HCT116 (cell line): ENCODE measurements at regions of chr6 and their contacts with region 1.

Region 1: GRCh38 chr6:28683944-28684538 is 158.4 kb downstream of the GPX5 start:
- DNase-seq: peak; percentile 60
- ATAC-seq: peak; percentile 91
- H3K4me3 ChIP-seq: no peak overlapping the region
- H3K27ac ChIP-seq: no peak overlapping the region
- H3K4me1 ChIP-seq: peaks cover 3 to 13% of the 10 kb centered on the region in 2 experiments; a peak in 3 of 4 replicates
- H3K27me3 ChIP-seq: no peaks in the 10 kb centered on the region
- CTCF ChIP-seq: peak; percentile 57 to 83 (median 71)
- POLR2A ChIP-seq: no peak
- RAD21 ChIP-seq: peak; percentile 97

Region 2: GRCh38 chr6:28136585-28137504 is 547.2 kb before region 1 on chr6:
- CTCF ChIA-PET with region 1: no interaction called
- POLR2A ChIA-PET with region 1: no interaction called
- RAD21 ChIA-PET with region 1: no interaction called
- intact Hi-C with region 1: loop called (anchors 2 kb)
- DNase-seq: peak; percentile 78
- ATAC-seq: peak; percentile 66
- H3K4me3 ChIP-seq: peak overlapping the region; percentile 90 to 93
- H3K27ac ChIP-seq: peak overlapping the region; percentile 50
- H3K4me1 ChIP-seq: peaks cover 10 to 19% of the 10 kb centered on the region in 2 experiments
- H3K27me3 ChIP-seq: no peaks in the 10 kb centered on the region
- CTCF ChIP-seq: no peak
- POLR2A ChIP-seq: peak; percentile 44
- RAD21 ChIP-seq: peak; percentile 25; the same call in 1 of the 2 replicates

Region 3: GRCh38 chr6:28393911-28394662 is 290.0 kb before region 1 on chr6:
- CTCF ChIA-PET with region 1: no interaction called
- POLR2A ChIA-PET with region 1: no interaction called
- RAD21 ChIA-PET with region 1: no interaction called
- intact Hi-C with region 1: loop called (anchors 5 kb)
- DNase-seq: no peak
- ATAC-seq: peak; percentile 58
- H3K4me3 ChIP-seq: no peak overlapping the region
- H3K27ac ChIP-seq: no peak overlapping the region
- H3K4me1 ChIP-seq: peaks cover 0 to 14% of the 10 kb centered on the region in 2 experiments; a peak in 2 of 4 replicates
- H3K27me3 ChIP-seq: no peaks in the 10 kb centered on the region
- CTCF ChIP-seq: peak; percentile 29 to 48 (median 36); a peak in 4 of 6 replicates
- POLR2A ChIP-seq: no peak
- RAD21 ChIP-seq: peak; percentile 51

Region 4: DNA sequence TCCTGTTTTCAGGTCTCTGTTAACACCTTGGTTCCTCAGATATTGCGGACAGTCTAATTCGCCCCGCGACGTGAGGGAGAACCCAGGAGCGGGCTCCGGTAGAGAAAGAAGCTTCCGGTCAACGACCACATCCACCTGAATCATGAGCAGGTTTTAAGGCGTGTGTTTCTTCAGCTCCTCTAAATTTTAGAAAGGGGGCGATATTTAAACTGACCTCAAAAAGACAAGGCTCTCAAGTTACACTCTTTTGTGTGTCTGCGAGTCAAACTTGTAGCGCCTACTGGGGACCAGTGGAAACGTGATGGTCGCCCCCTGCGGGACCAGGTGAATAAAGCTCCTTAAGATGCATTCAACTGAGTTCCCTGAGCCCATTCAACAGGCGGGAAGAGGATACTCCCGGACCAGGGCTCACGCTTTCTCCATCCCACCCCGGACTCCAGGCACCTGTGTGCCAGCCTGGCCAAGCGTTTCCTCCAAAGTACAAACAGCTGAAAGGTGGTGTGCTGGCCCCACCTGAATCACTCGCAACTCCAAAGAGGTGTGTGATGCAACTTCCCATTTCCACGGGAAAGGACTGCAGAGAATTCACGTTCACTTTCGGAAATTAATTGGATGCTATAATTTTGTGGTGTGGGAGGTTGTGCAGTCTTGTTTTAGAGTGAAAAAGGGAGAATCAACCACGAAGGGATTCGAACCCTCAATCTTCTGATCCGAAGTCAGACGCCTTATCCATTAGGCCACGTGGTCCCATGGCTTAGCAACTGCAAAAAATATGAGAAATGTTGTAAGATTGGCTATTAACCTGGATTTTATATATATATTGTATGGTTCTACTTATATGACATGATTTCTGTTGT is 141.4 kb before region 1 on chr6:
- CTCF ChIA-PET with region 1: no interaction called
- POLR2A ChIA-PET with region 1: no interaction called
- RAD21 ChIA-PET with region 1: no interaction called
- intact Hi-C with region 1: loop called (anchors 5 kb)
- DNase-seq: peak; percentile 90
- ATAC-seq: peak; percentile 89
- H3K4me3 ChIP-seq: 0 out of 4 replicates have a peak overlapping the region, but pooled peaks of 1 of the 2 experiments have one; percentile 17
- H3K27ac ChIP-seq: peak overlapping the region; percentile 46
- H3K4me1 ChIP-seq: peaks cover 6 to 21% of the 10 kb centered on the region in 2 experiments; a peak in 3 of 4 replicates
- H3K27me3 ChIP-seq: no peaks in the 10 kb centered on the region
- CTCF ChIP-seq: peak; percentile 74 to 85 (median 75)
- POLR2A ChIP-seq: no peak
- RAD21 ChIP-seq: peak; percentile 62

Region 5: DNA sequence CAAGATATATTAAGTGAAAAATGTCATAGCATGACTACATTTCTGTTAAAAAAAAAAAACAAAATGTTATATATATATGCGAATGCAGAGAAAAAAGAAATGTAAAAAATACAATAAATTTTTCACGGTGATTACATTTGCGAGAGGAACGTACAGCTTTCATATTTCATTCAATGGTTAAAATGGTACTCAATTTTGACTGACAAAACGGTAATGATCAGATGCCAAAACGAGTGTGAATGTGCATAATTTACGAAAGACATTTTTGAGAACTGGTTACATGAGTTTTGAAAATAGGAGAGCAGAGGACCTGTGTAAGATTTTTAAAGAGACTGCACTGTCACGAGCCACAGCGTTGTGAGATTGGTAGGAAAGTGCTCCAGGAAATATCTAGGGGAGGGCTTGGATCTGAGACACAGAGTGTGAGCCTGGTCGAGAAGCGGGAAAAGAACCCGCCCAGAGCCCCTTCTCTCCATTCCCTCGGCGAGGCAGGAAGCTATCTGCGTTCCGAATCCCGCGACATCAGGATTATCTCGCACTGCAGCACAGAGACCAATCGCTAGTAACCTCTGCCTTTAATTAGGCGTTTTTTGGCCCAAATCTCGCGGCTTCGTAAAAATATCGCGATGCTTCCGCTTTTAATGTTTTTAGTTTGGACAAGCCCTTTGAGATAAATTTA is 211.2 kb after region 1 on chr6:
- CTCF ChIA-PET with region 1: no interaction called
- POLR2A ChIA-PET with region 1: no interaction called
- RAD21 ChIA-PET with region 1: no interaction called
- intact Hi-C with region 1: loop called (anchors 2 kb)
- DNase-seq: peak; percentile 95
- ATAC-seq: peak; percentile 75
- H3K4me3 ChIP-seq: peak overlapping the region; percentile 61 to 66
- H3K27ac ChIP-seq: peak overlapping the region; percentile 85
- H3K4me1 ChIP-seq: peaks cover 11 to 37% of the 10 kb centered on the region in 2 experiments; a peak in 3 of 4 replicates
- H3K27me3 ChIP-seq: no peaks in the 10 kb centered on the region
- CTCF ChIP-seq: no peak
- POLR2A ChIP-seq: peak; percentile 69
- RAD21 ChIP-seq: no peak

Region 6: DNA sequence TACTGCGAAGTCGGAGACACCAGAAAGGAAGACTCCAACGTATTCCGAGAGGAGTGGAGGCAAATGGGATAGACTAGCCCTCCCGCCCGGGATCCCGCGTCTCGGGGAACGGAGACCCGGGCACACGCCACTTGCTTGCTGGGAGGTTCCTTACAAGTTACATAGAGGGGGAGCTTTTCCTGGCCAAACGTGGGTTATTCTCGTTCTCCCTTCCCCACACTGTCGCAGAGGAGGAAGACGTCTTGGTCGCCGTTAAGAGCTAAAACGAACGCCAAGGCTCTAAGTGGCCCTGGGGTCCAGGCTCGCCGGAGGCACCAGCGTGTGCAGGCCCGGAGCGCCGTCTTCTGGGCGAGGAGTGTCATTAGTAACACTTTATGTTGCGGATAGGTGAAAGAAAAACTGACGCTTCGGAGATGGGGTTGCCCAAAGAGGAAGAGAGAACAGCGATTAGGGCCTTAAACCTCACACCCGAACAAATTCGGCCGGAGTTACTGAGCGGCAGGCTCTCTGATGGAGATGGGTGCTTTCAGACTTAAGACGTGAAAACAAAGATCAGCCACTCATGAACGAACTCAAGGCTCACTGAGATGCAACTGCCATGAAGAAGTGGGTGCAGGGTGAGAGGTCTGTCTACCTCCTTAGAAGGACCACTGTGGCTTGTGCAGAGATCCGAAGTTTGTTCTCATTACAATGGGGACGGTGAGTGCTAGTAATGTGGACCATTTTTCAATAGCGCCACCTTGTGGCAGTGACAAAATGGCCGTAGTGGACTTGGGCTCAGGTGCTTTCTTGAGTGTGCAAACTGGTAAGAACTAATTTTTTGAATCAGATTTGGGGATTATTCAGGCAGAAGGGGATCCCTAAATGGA is 332.8 kb after region 1 on chr6:
- CTCF ChIA-PET with region 1: no interaction called
- POLR2A ChIA-PET with region 1: no interaction called
- RAD21 ChIA-PET with region 1: no interaction called
- intact Hi-C with region 1: loop called (anchors 2 kb)
- DNase-seq: peak; percentile 72
- ATAC-seq: peak; percentile 95
- H3K4me3 ChIP-seq: no peak overlapping the region
- H3K27ac ChIP-seq: no peak overlapping the region
- H3K4me1 ChIP-seq: no peaks in the 10 kb centered on the region
- H3K27me3 ChIP-seq: no peaks in the 10 kb centered on the region
- CTCF ChIP-seq: peak; percentile 66 to 86 (median 84)
- POLR2A ChIP-seq: no peak
- RAD21 ChIP-seq: peak; percentile 80

Region 7: DNA sequence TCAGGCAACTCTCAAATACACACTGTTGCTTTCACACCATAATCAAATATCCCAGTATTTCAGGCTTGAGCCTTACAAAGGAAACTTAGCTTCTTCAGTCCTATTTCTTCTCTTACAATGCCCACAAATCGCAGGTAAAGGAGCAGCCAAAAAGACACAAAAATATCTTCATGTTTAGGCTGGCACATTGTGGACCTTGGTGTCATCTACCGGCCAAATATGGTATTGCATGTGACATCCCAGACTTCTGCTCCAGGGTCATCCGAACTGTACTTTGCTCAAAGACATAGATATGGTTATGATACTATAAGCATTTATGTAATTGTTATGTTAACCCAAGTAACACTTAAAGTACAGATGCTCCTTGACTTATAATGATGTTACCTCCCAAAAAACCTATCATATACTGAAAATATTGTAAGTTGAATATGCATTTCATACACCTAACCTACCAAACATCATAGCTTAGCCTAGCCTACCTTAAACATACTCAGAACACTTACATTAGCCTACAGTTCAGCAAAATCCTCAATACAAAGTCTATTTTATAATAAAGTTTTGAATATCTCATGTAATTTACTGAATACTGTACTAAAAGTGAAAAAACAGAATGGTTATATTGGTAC is 905.5 kb after region 1 on chr6:
- CTCF ChIA-PET with region 1: no interaction called
- POLR2A ChIA-PET with region 1: no interaction called
- RAD21 ChIA-PET with region 1: no interaction called
- intact Hi-C with region 1: loop called (anchors 1 kb)
- DNase-seq: peak; percentile 33
- ATAC-seq: peak; percentile 82
- H3K4me3 ChIP-seq: no peak overlapping the region
- H3K27ac ChIP-seq: no peak overlapping the region
- H3K4me1 ChIP-seq: no peaks in the 10 kb centered on the region
- H3K27me3 ChIP-seq: 0 out of 2 replicates have a peak, but pooled peaks cover 6% of the 10 kb centered on the region
- CTCF ChIP-seq: peak; percentile 81 to 99 (median 88)
- POLR2A ChIP-seq: no peak
- RAD21 ChIP-seq: peak; percentile 95